ENCODE measurements at regions of chr1 and their contacts with region 1.

Region 1: GRCh38 chr1:156728597-156729462 is at the start of gene ISG20L2:
- DNase-seq: peak; percentile 98
- H3K4me3 Mint-ChIP-seq: no peak within 1 kb of the TSS
- H3K27ac Mint-ChIP-seq: no peak within 1 kb of the TSS
- H3K4me1 Mint-ChIP-seq: peaks cover 28% of the 10 kb centered on the region
- H3K27me3 Mint-ChIP-seq: no peaks in the 10 kb centered on the region

Region 2: GRCh38 chr1:155622191-155622590 is 1106.6 kb before region 1 on chr1:
- CTCF ChIA-PET with region 1: no interaction called
- DNase-seq: no peak
- H3K4me3 Mint-ChIP-seq: no peak overlapping the region
- H3K27ac Mint-ChIP-seq: no peak overlapping the region
- H3K4me1 Mint-ChIP-seq: no peaks in the 10 kb centered on the region
- H3K27me3 Mint-ChIP-seq: no peaks in the 10 kb centered on the region

Region 3: DNA sequence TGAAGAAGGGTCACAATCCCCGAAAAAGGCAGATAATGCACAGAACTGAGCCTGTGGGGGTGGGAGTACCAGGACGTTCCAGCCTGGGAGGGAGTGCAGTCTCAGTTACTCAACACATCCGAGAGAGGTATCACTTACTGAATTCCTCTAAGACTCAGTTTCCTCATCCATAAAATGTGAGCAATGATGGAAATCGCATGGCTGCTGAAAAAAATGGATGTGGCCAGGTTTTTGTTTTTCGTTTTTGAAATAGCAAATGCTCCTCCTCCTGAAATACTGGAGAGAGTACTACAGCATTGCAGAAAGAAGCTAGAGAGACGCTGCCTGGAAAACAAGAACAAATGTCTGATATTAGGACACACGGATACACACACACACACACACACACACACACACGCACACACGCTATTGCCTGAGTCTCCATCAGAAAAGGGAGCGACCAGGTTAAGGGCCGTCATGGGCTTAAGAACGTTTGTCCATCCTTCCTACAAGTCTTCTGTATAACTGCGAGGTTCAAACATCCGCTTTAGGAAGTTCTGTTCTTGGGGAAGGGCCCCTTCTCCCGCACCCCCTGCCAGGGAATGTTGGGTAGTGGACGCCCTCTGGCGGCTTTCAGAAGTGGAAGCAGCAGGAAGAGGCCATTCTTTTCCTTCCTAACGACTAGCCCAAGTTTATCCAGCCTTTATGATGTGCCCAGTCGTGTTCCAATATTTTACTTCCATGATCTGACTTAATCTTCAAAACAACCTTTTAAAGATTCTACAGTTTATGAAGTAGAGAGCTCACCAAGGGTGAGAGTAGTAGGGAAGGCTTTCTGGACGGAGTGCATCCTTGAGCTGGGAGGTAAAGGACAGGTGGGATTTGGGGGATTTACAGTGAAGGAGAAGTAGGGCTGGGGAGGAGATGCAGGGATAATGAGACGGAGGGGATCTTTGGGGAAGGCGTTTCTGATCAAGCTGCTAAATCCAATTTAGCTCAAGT is 50.9 kb before region 1 on chr1:
- CTCF ChIA-PET with region 1: interaction called, 10 read pairs
- DNase-seq: peak; percentile 49
- H3K4me3 Mint-ChIP-seq: no peak overlapping the region
- H3K27ac Mint-ChIP-seq: no peak overlapping the region
- H3K4me1 Mint-ChIP-seq: peaks cover 9% of the 10 kb centered on the region
- H3K27me3 Mint-ChIP-seq: peaks cover 98% of the 10 kb centered on the region

Region 4: GRCh38 chr1:156705918-156706656 is 22.7 kb before region 1 on chr1:
- CTCF ChIA-PET with region 1: interaction called, 29 read pairs
- DNase-seq: peak; percentile 78
- H3K4me3 Mint-ChIP-seq: peak overlapping the region; percentile 77
- H3K27ac Mint-ChIP-seq: no peak overlapping the region
- H3K4me1 Mint-ChIP-seq: peaks cover 24% of the 10 kb centered on the region
- H3K27me3 Mint-ChIP-seq: peaks cover 72% of the 10 kb centered on the region

Region 5: GRCh38 chr1:156746728-156747631 is 18.1 kb after region 1 on chr1:
- CTCF ChIA-PET with region 1: interaction called, 40 read pairs
- DNase-seq: peak; percentile 69
- H3K4me3 Mint-ChIP-seq: peak overlapping the region; percentile 94
- H3K27ac Mint-ChIP-seq: peak overlapping the region; percentile 91
- H3K4me1 Mint-ChIP-seq: peaks cover 72% of the 10 kb centered on the region
- H3K27me3 Mint-ChIP-seq: no peaks in the 10 kb centered on the region

Region 6: GRCh38 chr1:156767101-156767878 is 38.5 kb after region 1 on chr1 and contains the start of gene PRCC:
- CTCF ChIA-PET with region 1: interaction called, 95 read pairs
- DNase-seq: peak; percentile 99
- H3K4me3 Mint-ChIP-seq: no peak within 1 kb of the TSS
- H3K27ac Mint-ChIP-seq: no peak within 1 kb of the TSS
- H3K4me1 Mint-ChIP-seq: peaks cover 43% of the 10 kb centered on the region
- H3K27me3 Mint-ChIP-seq: peaks cover 4% of the 10 kb centered on the region

Region 7: DNA sequence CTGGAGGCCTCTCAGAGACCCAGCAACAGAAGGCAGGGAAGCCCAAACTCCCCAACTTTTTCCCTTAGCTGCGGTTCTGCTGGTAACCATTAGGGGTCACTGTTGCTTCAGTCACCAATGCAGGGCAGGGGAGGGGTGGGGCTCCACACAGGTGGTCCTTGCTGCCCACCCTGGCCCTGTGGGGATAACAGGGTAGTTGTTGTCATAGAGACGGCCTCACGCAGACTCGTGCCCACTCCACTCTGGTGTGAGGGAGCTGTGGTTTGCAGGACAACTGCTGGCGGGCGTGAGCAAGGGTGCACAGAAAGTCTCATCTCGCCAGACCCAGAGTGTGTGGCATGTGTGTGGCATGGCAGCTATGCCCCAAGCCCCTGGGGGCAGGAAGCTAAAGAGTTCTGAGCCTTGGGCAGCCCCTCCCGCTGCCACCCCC is 110.2 kb after region 1 on chr1:
- CTCF ChIA-PET with region 1: interaction called, 17 read pairs
- DNase-seq: peak; percentile 66
- H3K4me3 Mint-ChIP-seq: no peak overlapping the region
- H3K27ac Mint-ChIP-seq: no peak overlapping the region
- H3K4me1 Mint-ChIP-seq: peaks cover 34% of the 10 kb centered on the region
- H3K27me3 Mint-ChIP-seq: peaks cover 82% of the 10 kb centered on the region

Region 8: DNA sequence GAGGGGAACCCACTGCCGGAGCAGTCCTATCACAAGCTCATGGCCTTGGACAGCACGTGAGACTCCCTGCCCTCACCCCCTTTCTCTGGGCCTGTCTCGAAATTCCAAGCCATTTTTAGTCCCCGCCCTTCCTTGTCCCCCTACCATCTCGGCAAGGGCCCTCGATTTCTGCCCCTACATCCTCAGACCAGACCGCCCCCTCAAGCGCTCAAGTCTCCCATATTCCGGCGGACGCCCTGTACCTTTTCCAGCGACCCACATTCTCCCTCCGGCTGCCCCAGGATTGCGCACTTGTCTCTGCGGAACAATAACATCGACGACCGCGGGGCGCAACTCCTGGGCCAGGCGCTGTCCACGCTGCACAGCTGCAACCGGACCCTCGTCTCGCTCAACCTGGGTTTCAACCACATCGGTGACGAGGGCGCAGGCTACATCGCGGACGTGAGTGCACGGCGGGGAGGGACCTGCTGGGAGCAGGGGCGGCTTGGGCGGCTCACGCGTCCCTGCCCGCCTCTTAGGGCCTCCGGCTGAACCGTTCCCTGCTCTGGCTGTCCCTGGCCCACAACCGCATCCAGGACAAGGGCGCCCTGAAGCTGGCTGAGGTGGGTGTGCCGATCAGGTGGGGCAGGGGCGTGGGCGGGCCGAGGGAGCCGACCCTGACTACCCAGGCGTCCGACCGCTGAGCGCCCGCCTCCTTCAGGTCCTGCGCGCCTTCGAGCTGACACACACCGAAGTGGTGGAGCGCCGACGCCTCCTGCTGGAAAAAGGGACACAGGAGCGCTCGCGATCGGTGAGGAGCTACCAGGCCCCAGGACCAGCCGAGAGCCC is 198.6 kb after region 1 on chr1:
- CTCF ChIA-PET with region 1: interaction called, 10 read pairs
- DNase-seq: peak; percentile 85
- H3K4me3 Mint-ChIP-seq: no peak overlapping the region
- H3K27ac Mint-ChIP-seq: no peak overlapping the region
- H3K4me1 Mint-ChIP-seq: peaks cover 22% of the 10 kb centered on the region
- H3K27me3 Mint-ChIP-seq: peaks cover 100% of the 10 kb centered on the region

Measured in activated naive CD4-positive, alpha-beta T cell treated with anti-CD3 and anti-CD28 coated beads, Interleukin-2, amount 10 ng/mL, durations not matched to agents 7 days and 5 days (primary cell).